ENCODE measurements at regions of chr20 and their contacts with region 1.

Region 1: DNA sequence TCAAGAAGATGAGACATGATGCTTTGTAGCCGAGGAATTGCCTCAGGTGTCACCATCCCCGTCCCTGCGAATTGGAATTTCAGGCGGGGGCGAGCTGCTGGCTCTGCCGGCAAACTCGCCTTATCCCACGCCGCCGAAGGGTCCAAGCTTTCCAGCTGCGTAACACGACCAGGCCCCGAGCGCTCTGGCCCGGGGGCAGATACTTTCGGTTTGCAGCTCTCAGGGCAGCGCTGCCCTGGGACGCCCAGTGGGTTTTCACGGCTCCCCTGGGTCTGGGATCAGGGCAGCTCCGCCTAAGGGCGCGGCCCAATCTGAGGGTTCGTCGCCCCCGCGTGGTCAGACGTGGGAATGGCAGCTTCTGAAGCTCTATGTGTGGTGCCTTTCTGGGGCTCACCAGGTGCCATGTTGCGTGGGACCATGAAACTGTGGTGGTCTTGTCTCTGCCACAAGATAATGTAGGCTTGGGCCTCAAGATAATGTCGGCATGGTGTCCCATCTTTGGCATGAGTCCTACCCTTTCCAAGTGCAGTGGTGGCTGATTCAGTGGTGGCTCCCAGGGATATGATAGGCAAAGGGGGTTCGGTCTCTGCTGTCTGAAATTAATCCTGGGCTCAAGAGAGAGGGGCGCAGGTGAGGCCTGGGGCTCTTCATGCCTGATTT is 20.9 kb downstream of the PIGT start:
- DNase-seq: peak; percentile 82
- H3K4me3 Mint-ChIP-seq: peak overlapping the region; percentile 74
- H3K27ac Mint-ChIP-seq: peak overlapping the region; percentile 57
- H3K4me1 Mint-ChIP-seq: no peaks in the 10 kb centered on the region
- H3K27me3 Mint-ChIP-seq: no peaks in the 10 kb centered on the region
- CTCF ChIP-seq: peak; percentile 95

Region 2: GRCh38 chr20:45044084-45044573 is 392.7 kb before region 1 on chr20:
- CTCF ChIA-PET with region 1: interaction called, 4 read pairs
- POLR2A ChIA-PET with region 1: no interaction called
- intact Hi-C with region 1: loop called (anchors 10 kb)
- DNase-seq: peak; percentile 88
- H3K4me3 Mint-ChIP-seq: no peak overlapping the region
- H3K27ac Mint-ChIP-seq: peak overlapping the region; percentile 73
- H3K4me1 Mint-ChIP-seq: peaks cover 33% of the 10 kb centered on the region
- H3K27me3 Mint-ChIP-seq: no peaks in the 10 kb centered on the region
- CTCF ChIP-seq: peak; percentile 90

Region 3: GRCh38 chr20:45322952-45323383 is 113.9 kb before region 1 on chr20:
- CTCF ChIA-PET with region 1: interaction called, 113 read pairs
- POLR2A ChIA-PET with region 1: interaction called, 9 read pairs
- intact Hi-C with region 1: loop called (anchors 1 kb)
- DNase-seq: peak; percentile 77
- H3K4me3 Mint-ChIP-seq: no peak overlapping the region
- H3K27ac Mint-ChIP-seq: peak overlapping the region; percentile 59
- H3K4me1 Mint-ChIP-seq: peaks cover 6% of the 10 kb centered on the region
- H3K27me3 Mint-ChIP-seq: no peaks in the 10 kb centered on the region
- CTCF ChIP-seq: peak; percentile 8

Region 4: DNA sequence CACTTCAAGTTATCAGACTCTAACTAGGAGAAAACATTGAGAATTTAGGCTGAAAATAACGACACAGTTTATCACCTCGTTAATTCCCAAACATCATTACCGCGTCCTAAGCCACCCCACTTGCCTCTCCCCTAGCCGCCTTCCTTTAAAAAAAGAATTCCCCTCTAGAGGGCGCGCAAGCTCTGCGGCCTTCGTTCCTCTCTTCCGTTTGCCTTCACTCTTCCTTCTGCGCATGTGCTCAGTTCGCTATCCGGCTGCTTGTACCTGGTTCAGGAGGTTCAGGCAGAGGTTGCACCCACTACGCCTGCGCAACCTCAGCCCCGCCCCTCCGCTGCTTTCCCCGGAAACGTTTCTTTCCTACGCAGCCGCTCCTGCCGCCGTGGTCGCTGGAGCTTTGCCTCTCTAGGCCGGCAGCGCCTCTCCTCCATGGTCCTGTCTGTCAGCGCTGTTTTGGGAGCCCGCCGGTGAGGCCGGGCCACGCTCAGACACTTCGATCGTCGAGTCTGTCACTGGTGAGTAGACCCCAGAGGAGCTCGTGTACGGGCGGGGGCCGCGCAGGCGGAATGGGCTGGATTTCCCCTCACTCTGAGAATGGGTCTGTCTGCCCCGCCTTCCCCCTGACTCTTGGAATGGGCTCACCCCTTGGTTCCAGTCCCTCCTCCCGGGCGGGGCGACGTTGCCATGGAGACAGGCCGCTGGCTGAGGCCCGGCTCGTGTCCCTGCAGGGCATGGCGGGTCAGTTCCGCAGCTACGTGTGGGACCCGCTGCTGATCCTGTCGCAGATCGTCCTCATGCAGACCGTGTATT is 73.9 kb before region 1 on chr20 and contains the start of gene SYS1:
- CTCF ChIA-PET with region 1: interaction called, 96 read pairs
- POLR2A ChIA-PET with region 1: interaction called, 33 read pairs
- intact Hi-C with region 1: loop called (anchors 1 kb)
- DNase-seq: peak; percentile 99
- H3K4me3 Mint-ChIP-seq: peak within 1 kb of the TSS; percentile 97
- H3K27ac Mint-ChIP-seq: peak within 1 kb of the TSS; percentile 95
- H3K4me1 Mint-ChIP-seq: peaks cover 30% of the 10 kb centered on the region
- H3K27me3 Mint-ChIP-seq: no peaks in the 10 kb centered on the region
- CTCF ChIP-seq: peak; percentile 67
- total RNA-seq, gene SYS1: 19.1 and 28.2 TPM in 2 replicates

Region 5: DNA sequence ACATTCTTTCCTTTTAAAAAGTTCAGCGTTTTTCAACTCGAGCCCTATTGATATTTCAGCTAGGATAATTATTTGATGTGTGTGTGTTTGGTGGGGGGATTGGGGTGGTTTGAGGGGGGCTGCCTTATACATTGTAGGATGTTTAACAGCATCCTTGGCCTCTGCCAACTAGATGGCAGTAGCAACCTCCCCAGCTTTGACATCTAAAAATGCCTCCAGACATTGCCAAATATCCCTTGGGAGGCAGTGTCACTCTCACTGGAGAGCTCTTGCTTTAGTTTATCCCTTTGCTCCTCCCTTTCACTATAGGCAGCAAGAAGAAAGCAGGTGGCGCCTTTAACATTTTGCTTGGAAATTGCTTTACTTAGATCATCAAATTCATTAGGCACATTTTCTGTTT is 44.1 kb before region 1 on chr20:
- CTCF ChIA-PET with region 1: interaction called, 20 read pairs
- POLR2A ChIA-PET with region 1: interaction called, 3 read pairs
- intact Hi-C with region 1: no loop called
- DNase-seq: no peak
- H3K4me3 Mint-ChIP-seq: no peak overlapping the region
- H3K27ac Mint-ChIP-seq: no peak overlapping the region
- H3K4me1 Mint-ChIP-seq: no peaks in the 10 kb centered on the region
- H3K27me3 Mint-ChIP-seq: no peaks in the 10 kb centered on the region
- CTCF ChIP-seq: no peak

Region 6: GRCh38 chr20:45415774-45416637 is 20.9 kb before region 1 on chr20 and contains the start of gene PIGT:
- CTCF ChIA-PET with region 1: interaction called, 40 read pairs
- POLR2A ChIA-PET with region 1: interaction called, 21 read pairs
- intact Hi-C with region 1: no loop called
- DNase-seq: peak; percentile 81
- H3K4me3 Mint-ChIP-seq: peak within 1 kb of the TSS; percentile 90
- H3K27ac Mint-ChIP-seq: peak within 1 kb of the TSS; percentile 93
- H3K4me1 Mint-ChIP-seq: peaks cover 24% of the 10 kb centered on the region
- H3K27me3 Mint-ChIP-seq: no peaks in the 10 kb centered on the region
- CTCF ChIP-seq: no peak
- total RNA-seq, gene PIGT: 79.4 and 84.3 TPM in 2 replicates

Region 7: DNA sequence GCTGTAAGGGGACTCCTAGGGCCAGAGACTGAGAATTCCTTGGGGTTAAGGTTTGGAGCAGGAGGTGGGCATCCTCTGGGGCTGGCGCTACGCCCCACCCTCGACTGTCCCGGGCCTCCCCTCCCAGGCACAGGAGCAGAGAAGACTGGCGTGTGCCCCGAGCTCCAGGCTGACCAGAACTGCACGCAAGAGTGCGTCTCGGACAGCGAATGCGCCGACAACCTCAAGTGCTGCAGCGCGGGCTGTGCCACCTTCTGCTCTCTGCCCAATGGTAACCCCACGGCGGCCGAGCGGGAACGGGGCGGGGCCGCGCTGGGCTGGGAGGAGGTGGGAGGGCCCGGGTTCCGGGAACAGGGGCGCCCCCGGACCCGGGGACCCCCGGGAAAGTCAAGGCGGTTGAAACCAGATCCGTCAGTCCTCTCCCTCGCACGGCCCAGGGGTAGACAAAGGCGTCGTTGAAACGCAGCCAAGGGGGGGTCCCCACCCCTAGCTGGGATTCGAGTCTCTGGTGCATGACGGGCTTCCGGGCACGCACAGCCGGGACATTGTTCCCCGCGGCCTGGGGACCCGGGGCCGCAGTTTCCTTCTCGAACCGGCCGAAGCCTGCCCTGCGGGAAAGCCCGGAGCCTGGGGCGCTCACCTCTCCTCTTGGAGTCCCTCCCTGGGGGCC is 33.5 kb after region 1 on chr20:
- CTCF ChIA-PET with region 1: interaction called, 13 read pairs
- POLR2A ChIA-PET with region 1: no interaction called
- intact Hi-C with region 1: no loop called
- DNase-seq: no peak
- H3K4me3 Mint-ChIP-seq: peak overlapping the region; percentile 9
- H3K27ac Mint-ChIP-seq: no peak overlapping the region
- H3K4me1 Mint-ChIP-seq: no peaks in the 10 kb centered on the region
- H3K27me3 Mint-ChIP-seq: peaks cover 15% of the 10 kb centered on the region
- CTCF ChIP-seq: no peak

Measured in MCF 10A (cell line).